ENCODE measurements at regions of chr15 and their contacts with region 1.

Region 1: DNA sequence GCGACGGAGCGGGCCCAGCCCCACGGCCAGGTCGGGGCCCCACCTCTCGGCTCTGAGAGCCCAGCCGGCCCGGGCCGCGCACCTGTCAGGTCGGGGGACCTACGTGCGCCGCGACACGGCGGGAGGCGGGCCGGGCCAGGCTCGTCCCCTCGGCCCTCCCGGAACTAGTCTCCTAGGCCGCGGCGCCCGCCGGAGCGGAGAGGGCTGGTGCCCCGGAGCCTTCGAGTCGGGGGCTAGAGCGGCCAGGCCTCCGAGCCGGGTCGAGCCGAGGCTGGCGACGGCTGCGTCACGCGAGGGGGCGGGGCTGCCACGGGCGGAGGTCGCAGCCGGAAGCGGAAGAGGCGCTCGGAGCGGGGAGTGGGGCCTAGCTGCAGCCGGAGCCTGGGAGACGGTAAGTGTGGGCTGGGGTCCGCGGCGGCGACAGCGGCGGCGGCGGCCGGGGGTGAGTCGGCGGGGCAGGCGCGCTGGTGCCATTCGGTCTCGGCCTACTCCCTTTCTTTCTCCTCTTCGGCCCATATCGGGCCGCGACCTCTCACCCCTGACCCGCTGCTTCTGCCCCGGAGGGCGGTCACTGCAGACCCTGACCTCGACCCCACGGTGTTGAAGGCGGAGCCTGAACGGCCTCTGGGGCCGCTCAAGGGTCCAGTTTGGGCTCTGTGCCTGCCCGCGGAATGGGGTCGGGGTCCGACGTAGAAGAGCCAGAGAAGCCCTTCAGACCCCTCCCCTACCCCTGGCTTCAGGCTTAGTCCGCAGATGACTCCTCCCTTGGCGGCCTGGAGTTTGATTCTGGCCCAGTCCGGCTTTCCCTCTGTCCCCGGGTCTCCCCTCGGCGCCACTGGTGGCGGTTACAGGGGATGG is at the start of gene CLK3:
- DNase-seq: peak; percentile 98

Region 2: GRCh38 chr15:74540761-74541493 is 74.8 kb before region 1 on chr15 and contains the start of gene ARID3B:
- CTCF ChIA-PET with region 1: no interaction called
- POLR2A ChIA-PET with region 1: interaction called, 70 read pairs
- DNase-seq: peak; percentile 96

Region 3: GRCh38 chr15:74545880-74546656 is 69.7 kb before region 1 on chr15:
- CTCF ChIA-PET with region 1: no interaction called
- POLR2A ChIA-PET with region 1: interaction called, 70 read pairs
- DNase-seq: peak; percentile 94

Region 4: DNA sequence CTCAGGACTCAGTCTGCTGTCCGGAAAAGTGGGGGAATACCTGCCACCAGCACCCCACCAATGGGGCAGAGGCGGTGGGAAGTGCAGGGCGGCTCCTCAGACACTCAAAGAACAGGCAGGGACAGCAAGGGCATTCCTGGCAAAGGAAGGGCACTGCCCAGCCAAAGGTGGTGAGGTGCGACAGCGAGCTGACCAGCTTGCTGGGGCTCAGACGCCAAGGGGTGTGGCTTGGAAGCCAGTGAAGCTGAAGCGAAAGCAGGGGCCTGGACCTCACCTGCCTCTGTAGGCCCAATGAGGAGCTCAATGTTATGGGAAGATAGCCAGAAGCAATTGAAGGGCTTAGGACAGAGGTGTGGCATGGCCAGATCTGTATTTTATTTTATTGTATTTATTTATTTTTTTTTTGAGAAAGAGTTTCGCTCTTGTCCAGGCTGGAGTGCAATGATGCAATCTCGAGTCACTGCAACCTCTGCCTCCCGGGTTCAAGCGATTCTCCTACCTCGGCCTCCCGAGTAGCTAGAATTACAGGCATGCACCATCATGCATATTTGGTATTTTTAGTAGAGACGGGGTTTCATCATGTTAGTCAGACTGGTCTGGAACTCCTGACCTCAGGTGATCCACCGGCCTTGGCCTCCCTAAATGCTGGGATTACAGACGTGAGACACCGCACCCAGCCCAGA is 192.5 kb after region 1 on chr15:
- CTCF ChIA-PET with region 1: no interaction called
- POLR2A ChIA-PET with region 1: no interaction called
- DNase-seq: no peak